BJ (cell line): ENCODE measurements at regions of chr1 and their contacts with region 1.

Region 1: DNA sequence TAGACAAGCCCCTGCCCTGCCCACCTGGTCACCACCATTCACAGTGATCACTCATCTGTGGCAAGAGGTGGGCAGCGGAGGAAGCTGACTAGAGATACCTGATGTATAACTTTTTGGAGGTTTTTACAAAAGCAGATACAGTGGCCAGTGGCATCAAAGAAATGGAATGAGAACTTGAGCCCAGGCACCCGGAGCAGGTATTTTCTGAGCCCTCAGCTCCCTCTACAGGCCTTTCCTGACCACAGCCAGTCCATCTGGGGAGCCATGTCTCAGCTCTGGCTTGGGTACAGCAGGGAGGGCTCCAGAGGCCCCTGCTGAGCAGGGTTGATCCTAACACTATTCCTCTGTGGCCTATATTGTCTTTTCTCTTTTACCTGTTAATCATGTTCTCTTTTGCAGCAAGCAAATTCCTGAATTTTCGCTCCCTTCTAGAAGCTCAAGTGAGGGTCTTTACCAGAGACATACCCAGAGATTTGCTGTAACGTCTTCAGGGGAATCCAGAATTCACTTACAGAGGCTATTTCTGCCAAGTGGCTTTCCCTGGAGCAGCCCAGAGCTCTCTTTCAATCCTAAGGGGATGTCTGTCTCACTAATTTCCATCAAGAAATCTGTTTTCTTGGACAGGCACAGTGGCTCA is 27.3 kb downstream of the GPR157 start:
- DNase-seq: no peak
- H3K4me3 ChIP-seq: no peak overlapping the region
- H3K27me3 ChIP-seq: no peaks in the 10 kb centered on the region
- CTCF ChIP-seq: peak; percentile 85

Region 2: GRCh38 chr1:8629241-8630091 is 472.2 kb before region 1 on chr1:
- CTCF ChIA-PET with region 1: no interaction called
- POLR2A ChIA-PET with region 1: no interaction called
- DNase-seq: no peak
- H3K4me3 ChIP-seq: no peak overlapping the region
- H3K27me3 ChIP-seq: no peaks in the 10 kb centered on the region
- CTCF ChIP-seq: no peak

Region 3: GRCh38 chr1:8908388-8909151 is 193.1 kb before region 1 on chr1:
- CTCF ChIA-PET with region 1: interaction called, 124 read pairs
- POLR2A ChIA-PET with region 1: no interaction called
- DNase-seq: no peak
- H3K4me3 ChIP-seq: no peak overlapping the region
- H3K27me3 ChIP-seq: no peaks in the 10 kb centered on the region
- CTCF ChIP-seq: no peak

Region 4: DNA sequence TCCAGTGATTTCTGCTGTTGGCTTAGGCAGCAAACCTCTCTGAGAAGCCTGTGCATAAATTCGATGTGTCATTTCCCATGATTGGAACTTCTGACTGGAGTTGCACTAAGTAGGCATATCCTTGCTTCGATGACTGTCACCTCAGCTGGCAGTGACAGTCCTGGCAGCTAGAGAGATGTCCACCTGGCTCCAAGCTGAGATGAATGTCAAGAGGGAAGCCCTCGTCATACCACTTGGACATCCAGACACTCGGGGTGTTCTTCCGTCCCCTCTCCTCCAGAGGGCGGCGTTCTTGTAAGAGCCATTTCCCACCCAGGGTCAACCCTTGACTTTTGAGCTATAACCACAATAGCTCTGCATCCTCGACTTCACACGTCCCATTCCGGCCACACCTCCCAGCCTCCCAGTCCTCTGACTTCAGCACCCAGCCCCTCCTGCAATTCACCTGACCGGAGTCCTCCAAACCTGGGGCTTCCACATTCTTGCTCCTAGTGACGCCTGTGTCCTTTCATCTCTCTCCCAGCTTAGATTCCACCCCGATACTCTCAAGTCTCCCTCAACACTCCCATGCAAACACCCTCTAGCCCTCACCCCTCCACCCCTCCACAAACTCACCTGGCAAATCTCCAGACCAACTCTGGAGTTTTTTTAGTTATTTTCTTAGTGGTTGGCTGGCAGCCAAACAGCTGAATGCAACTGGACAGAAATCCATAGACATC is 138.7 kb before region 1 on chr1:
- CTCF ChIA-PET with region 1: interaction called, 25 read pairs
- POLR2A ChIA-PET with region 1: no interaction called
- DNase-seq: no peak
- H3K4me3 ChIP-seq: no peak overlapping the region
- H3K27me3 ChIP-seq: peaks cover 2% of the 10 kb centered on the region; the same call in 1 of the 2 replicates
- CTCF ChIP-seq: peak; percentile 63

Region 5: DNA sequence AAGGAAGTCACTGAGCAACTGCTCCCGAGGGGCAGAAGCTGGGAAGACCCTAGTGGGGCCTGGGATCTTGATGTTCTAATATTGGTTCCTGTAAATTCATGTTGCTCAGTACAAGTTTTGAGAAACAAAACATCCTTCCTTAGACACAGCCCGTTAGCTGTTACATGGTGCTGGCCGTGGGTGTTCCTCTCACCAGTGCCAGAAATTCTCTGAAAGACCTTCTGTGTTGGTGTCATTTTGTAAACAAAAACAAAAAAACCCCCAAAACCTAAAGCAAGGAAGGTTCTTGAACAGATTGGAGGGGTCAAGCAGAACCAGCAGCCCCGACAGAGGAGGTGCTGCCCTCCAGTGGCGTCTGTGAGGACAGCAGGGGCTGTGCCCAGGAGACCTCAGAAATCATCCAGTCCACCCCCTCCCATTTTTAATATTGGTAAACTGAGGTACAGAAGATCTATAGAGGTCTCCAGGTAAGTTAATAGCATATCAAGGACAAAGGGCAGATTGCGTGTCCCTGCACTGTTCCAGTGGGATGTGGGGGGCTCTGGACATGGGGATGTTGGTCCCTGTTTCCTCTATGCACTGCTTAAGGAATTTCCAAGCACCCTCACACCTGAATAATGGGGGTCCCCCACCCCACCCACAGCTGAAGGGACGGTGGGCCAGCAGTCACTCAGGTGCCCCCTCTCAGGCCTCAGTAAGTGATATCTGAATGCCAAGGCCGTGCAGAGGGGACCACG is 113.6 kb before region 1 on chr1:
- CTCF ChIA-PET with region 1: interaction called, 40 read pairs
- POLR2A ChIA-PET with region 1: no interaction called
- DNase-seq: no peak
- H3K4me3 ChIP-seq: no peak overlapping the region
- H3K27me3 ChIP-seq: no peaks in the 10 kb centered on the region
- CTCF ChIP-seq: peak; percentile 94

Region 6: GRCh38 chr1:9004700-9005394 is 96.8 kb before region 1 on chr1:
- CTCF ChIA-PET with region 1: interaction called, 38 read pairs
- POLR2A ChIA-PET with region 1: interaction called, 4 read pairs
- DNase-seq: peak; percentile 40
- H3K4me3 ChIP-seq: no peak overlapping the region
- H3K27me3 ChIP-seq: no peaks in the 10 kb centered on the region; the same call in 1 of the 2 replicates
- CTCF ChIP-seq: peak; percentile 87

Region 7: GRCh38 chr1:9037476-9038337 is 63.9 kb before region 1 on chr1:
- CTCF ChIA-PET with region 1: interaction called, 13 read pairs
- POLR2A ChIA-PET with region 1: no interaction called
- DNase-seq: no peak
- H3K4me3 ChIP-seq: no peak overlapping the region
- H3K27me3 ChIP-seq: peaks cover 12% of the 10 kb centered on the region
- CTCF ChIP-seq: no peak

Region 8: DNA sequence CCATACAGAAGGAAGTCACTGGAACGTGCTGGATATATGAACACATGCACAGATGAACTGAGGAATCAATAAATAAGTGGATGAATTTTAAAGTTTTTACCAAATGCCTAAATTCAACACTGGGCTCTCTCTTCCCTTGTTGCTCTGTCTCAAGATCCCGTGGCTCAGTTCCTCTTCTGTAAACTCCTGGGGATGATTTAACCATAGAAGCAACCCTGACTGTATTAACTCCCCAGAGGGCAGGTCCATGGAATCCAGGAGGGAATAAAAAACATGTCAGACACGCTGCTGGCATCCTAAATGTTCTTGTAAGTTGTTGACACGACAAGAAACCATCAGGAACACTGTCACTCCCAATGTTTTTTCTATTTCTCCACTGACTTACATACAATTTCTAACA is 72.6 kb after region 1 on chr1:
- CTCF ChIA-PET with region 1: no interaction called
- POLR2A ChIA-PET with region 1: no interaction called
- DNase-seq: no peak
- H3K4me3 ChIP-seq: no peak overlapping the region
- H3K27me3 ChIP-seq: no peaks in the 10 kb centered on the region
- CTCF ChIP-seq: no peak

Region 9: GRCh38 chr1:9196129-9197040 is 94.8 kb after region 1 on chr1:
- CTCF ChIA-PET with region 1: interaction called, 13 read pairs
- POLR2A ChIA-PET with region 1: no interaction called
- DNase-seq: no peak
- H3K4me3 ChIP-seq: no peak overlapping the region
- H3K27me3 ChIP-seq: peaks cover 3% of the 10 kb centered on the region
- CTCF ChIP-seq: peak; percentile 79